MCF 10A (cell line): ENCODE measurements at regions of chr1 and their contacts with region 1.

Region 1: GRCh38 chr1:235415008-235415904 is 48.0 kb downstream of the TBCE start:
- DNase-seq: peak; percentile 88
- H3K4me3 Mint-ChIP-seq: no peak overlapping the region
- H3K27ac Mint-ChIP-seq: no peak overlapping the region
- H3K4me1 Mint-ChIP-seq: peaks cover 18% of the 10 kb centered on the region
- H3K27me3 Mint-ChIP-seq: no peaks in the 10 kb centered on the region
- CTCF ChIP-seq: peak; percentile 86

Region 2: GRCh38 chr1:234486498-234487448 is 928.5 kb before region 1 on chr1:
- CTCF ChIA-PET with region 1: interaction called, 21 read pairs
- POLR2A ChIA-PET with region 1: no interaction called
- intact Hi-C with region 1: loop called (anchors 1 kb)
- DNase-seq: peak; percentile 87
- H3K4me3 Mint-ChIP-seq: no peak overlapping the region
- H3K27ac Mint-ChIP-seq: no peak overlapping the region
- H3K4me1 Mint-ChIP-seq: peaks cover 15% of the 10 kb centered on the region
- H3K27me3 Mint-ChIP-seq: peaks cover 20% of the 10 kb centered on the region
- CTCF ChIP-seq: peak; percentile 96

Region 3: GRCh38 chr1:235199441-235199840 is 215.8 kb before region 1 on chr1:
- CTCF ChIA-PET with region 1: interaction called, 15 read pairs
- POLR2A ChIA-PET with region 1: interaction called, 4 read pairs
- intact Hi-C with region 1: loop called (anchors 1 kb)
- DNase-seq: peak; percentile 44
- H3K4me3 Mint-ChIP-seq: no peak overlapping the region
- H3K27ac Mint-ChIP-seq: peak overlapping the region; percentile 13
- H3K4me1 Mint-ChIP-seq: peaks cover 9% of the 10 kb centered on the region
- H3K27me3 Mint-ChIP-seq: no peaks in the 10 kb centered on the region
- CTCF ChIP-seq: peak; percentile 31

Region 4: GRCh38 chr1:235246022-235246991 is 168.9 kb before region 1 on chr1:
- CTCF ChIA-PET with region 1: interaction called, 76 read pairs
- POLR2A ChIA-PET with region 1: interaction called, 17 read pairs
- intact Hi-C with region 1: no loop called
- DNase-seq: peak; percentile 35
- H3K4me3 Mint-ChIP-seq: no peak overlapping the region
- H3K27ac Mint-ChIP-seq: peak overlapping the region; percentile 10
- H3K4me1 Mint-ChIP-seq: peaks cover 18% of the 10 kb centered on the region
- H3K27me3 Mint-ChIP-seq: no peaks in the 10 kb centered on the region
- CTCF ChIP-seq: no peak

Region 5: DNA sequence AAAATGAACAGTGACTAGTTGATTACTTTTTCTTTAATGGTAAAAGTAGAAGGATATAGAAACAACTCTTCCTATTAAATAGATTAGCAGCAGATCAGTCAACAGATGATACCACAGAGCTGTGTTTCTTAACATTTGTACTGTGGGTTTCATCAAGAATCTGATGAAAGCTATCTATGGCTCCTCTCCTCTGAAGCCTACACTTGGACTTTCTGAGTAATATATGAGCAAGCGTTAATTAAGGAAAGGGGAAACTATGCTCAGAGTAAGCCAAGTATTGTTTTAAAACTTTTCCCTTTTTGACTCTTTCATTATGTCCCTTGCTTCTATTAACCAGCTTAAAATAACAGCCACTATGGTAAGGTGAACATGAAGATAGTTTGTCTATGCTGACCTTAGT is 98.1 kb before region 1 on chr1:
- CTCF ChIA-PET with region 1: interaction called, 34 read pairs
- POLR2A ChIA-PET with region 1: interaction called, 3 read pairs
- intact Hi-C with region 1: no loop called
- DNase-seq: no peak
- H3K4me3 Mint-ChIP-seq: no peak overlapping the region
- H3K27ac Mint-ChIP-seq: peak overlapping the region; percentile 17
- H3K4me1 Mint-ChIP-seq: peaks cover 46% of the 10 kb centered on the region
- H3K27me3 Mint-ChIP-seq: no peaks in the 10 kb centered on the region
- CTCF ChIP-seq: no peak

Region 6: DNA sequence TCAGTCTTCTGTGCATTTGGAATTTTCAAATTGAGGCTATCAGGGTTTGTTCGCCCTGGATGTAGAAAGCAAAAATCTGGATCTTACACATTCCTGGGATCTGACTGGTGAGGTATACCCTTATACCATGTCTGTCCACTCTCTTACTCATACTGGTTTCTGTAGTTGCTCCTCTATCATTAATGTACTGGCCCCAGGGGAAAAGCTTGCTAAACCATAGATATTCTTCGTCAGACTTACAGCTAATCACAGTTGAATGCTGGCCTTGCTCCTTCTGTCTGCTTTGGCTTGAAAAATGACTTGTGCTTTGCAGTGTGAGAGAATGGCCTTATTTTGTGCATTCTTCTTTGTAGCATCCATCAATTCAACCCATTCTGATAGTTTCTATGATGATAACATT is 17.5 kb before region 1 on chr1:
- CTCF ChIA-PET with region 1: interaction called, 66 read pairs
- POLR2A ChIA-PET with region 1: interaction called, 5 read pairs
- intact Hi-C with region 1: no loop called
- DNase-seq: peak; percentile 94
- H3K4me3 Mint-ChIP-seq: no peak overlapping the region
- H3K27ac Mint-ChIP-seq: no peak overlapping the region
- H3K4me1 Mint-ChIP-seq: peaks cover 39% of the 10 kb centered on the region
- H3K27me3 Mint-ChIP-seq: no peaks in the 10 kb centered on the region
- CTCF ChIP-seq: no peak